ENCODE measurements at regions of chr4 and their contacts with region 1.

Region 1: GRCh38 chr4:17544205-17544604 is 29.2 kb downstream of the CLRN2 start:
- DNase-seq: no peak
- ATAC-seq: no peak
- H3K4me3 Mint-ChIP-seq: no peak overlapping the region
- H3K27ac Mint-ChIP-seq: no peak overlapping the region
- H3K4me1 Mint-ChIP-seq: peaks cover 5% of the 10 kb centered on the region
- H3K27me3 Mint-ChIP-seq: peaks cover 34% of the 10 kb centered on the region

Region 2: DNA sequence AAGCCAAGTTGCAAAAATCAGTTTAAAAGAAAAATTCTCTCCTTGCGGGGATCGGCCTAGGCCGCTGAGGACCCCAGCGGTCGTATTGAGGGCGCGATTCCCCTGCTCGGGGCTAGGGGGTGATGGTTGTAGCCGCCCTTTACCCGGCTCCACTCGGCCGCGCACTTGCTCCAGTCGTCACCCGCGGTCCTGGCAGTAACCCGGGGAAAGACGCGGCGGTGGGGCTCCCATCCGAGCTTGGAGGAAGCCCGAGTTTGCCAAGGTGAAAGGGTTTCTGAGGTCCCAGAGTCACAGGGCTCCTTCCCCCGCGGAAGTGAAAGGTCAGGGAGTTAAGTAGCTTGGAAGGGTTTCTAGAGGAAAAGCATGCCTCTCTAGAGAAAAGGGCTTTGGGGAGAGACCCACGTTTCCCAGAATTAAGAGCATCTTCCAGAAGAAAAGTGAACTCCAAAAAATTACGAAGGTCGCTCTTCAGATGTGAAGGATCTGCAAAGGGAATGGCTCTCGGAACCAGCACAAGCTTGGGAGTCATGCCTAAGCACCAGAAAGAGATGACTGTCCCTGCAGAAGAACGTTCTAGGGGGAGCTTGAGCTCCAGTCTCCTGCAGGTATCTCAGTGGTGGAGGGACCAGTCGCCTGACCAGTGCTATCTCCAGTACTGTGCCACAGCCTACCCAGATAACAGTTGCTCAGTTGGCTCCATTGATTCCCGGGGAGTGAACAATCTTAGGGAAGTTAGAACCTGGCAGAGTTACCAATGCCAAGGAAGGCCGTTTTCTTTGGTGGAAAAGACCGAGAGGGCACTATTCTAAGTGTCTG is 33.7 kb after region 1 on chr4:
- CTCF ChIA-PET with region 1: interaction called, 18 read pairs
- DNase-seq: peak; percentile 64
- ATAC-seq: peak; percentile 13
- H3K4me3 Mint-ChIP-seq: peak overlapping the region; percentile 92
- H3K27ac Mint-ChIP-seq: peak overlapping the region; percentile 100
- H3K4me1 Mint-ChIP-seq: peaks cover 44% of the 10 kb centered on the region
- H3K27me3 Mint-ChIP-seq: no peaks in the 10 kb centered on the region

Region 3: GRCh38 chr4:17614416-17615299 is 70.5 kb after region 1 on chr4 and contains the start of gene MED28:
- CTCF ChIA-PET with region 1: interaction called, 13 read pairs
- DNase-seq: peak; percentile 98
- ATAC-seq: peak; percentile 92
- H3K4me3 Mint-ChIP-seq: peak within 1 kb of the TSS; percentile 95
- H3K27ac Mint-ChIP-seq: peak within 1 kb of the TSS; percentile 96
- H3K4me1 Mint-ChIP-seq: peaks cover 45% of the 10 kb centered on the region
- H3K27me3 Mint-ChIP-seq: no peaks in the 10 kb centered on the region
- total RNA-seq, gene MED28: 53.4 to 56.3 TPM

Region 4: GRCh38 chr4:17810260-17811077 is 266.3 kb after region 1 on chr4 and contains the starts of genes DCAF16 and NCAPG:
- CTCF ChIA-PET with region 1: interaction called, 13 read pairs
- DNase-seq: peak; percentile 99
- ATAC-seq: peak; percentile 90
- H3K4me3 Mint-ChIP-seq: peak within 1 kb of the TSS; percentile 96
- H3K27ac Mint-ChIP-seq: peak within 1 kb of the TSS; percentile 98
- H3K4me1 Mint-ChIP-seq: peaks cover 47% of the 10 kb centered on the region
- H3K27me3 Mint-ChIP-seq: no peaks in the 10 kb centered on the region
- total RNA-seq, gene DCAF16: 38.9 to 56.4 TPM
- total RNA-seq, gene NCAPG: 87.5 to 102 TPM

Measured in activated CD8-positive, alpha-beta memory T cell treated with anti-CD3 and anti-CD28 coated beads, Interleukin-2, amount 10 ng/mL, durations not matched to agents 7 days and 5 days (primary cell).